Right lobe of liver (tissue), 6 donors: ENCODE measurements at regions of chr18 and their contacts with region 1.

Region 1: DNA sequence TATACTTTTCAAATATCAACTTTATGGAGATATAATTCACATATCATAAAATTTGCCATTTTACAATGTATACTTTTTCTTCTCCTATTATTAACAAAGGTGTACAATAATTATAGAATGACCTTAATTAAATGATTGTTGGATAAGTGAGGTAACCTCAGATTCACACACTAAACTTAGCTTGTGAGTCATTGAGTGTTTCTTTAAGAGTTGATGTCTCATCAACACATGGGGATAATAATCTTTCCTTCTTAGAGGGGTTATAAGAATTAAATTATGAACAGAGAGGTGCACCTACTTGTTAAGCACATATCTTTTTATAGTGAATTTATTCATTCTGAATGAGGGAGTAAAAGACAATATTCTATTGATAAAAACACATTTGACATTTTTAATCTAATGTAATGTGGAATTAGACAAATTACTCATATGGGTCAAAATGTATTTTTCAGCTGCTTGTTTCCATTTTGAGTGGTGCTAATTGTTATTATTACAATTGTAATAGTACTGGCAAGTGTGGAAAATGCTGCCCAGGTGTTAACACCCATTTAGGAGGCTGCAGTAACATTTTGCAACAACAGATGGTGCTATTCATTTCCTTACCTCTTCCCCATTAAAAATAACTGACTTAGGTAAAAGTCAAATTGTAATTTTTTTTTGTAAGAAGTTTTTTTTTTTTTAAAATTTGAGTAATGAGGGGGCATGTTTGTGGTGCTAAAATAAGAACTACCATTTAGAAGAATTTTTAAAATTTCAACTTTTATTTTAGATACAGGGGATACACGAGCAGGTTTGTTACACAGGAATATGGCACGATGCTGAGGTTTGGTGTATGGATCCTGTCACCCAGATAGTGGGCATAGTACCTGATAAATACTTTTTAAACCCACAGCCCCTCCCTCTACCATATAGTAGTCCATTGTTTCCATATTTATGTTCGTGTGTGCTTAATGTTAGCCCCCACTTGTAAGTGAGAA is 32.1 kb upstream of the DYNAP start:
- DNase-seq: no peak
- ATAC-seq: peak; percentile 62 to 79 (median 72)
- H3K4me3 ChIP-seq: no peak overlapping the region
- H3K27ac ChIP-seq: no peak overlapping the region
- H3K4me1 ChIP-seq: no peaks in the 10 kb centered on the region
- H3K27me3 ChIP-seq: no peaks in the 10 kb centered on the region
- CTCF ChIP-seq: peak; percentile 71 to 81 (median 78)
- POLR2A ChIP-seq: no peak

Region 2: DNA sequence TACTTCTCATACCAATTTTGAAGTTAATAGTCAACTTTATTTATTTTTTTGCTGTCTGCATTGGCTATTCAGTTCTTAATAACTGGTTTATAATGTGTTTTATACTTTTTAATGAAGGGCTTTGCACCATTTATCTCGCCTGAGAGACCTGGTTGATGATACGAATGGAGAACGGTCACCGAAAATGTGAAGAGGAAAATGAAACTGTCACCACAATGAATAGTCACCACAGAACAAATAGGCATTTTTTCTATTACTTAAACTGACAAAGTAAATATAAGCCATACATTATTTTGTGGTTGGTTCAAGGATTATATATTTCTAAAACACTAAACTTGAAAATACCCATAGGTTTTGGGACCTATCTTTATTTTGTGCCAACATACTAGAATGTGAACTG is 180.8 kb before region 1 on chr18:
- intact Hi-C with region 1: no loop called
- DNase-seq: no peak
- ATAC-seq: no peak
- H3K4me3 ChIP-seq: no peak overlapping the region
- H3K27ac ChIP-seq: no peak overlapping the region
- H3K4me1 ChIP-seq: no peaks in the 10 kb centered on the region
- H3K27me3 ChIP-seq: no peaks in the 10 kb centered on the region
- CTCF ChIP-seq: no peak
- POLR2A ChIP-seq: no peak

Region 3: GRCh38 chr18:54480616-54481015 is 78.3 kb before region 1 on chr18:
- intact Hi-C with region 1: no loop called
- DNase-seq: no peak
- ATAC-seq: no peak
- H3K4me3 ChIP-seq: no peak overlapping the region
- H3K27ac ChIP-seq: no peak overlapping the region
- H3K4me1 ChIP-seq: no peaks in the 10 kb centered on the region
- H3K27me3 ChIP-seq: no peaks in the 10 kb centered on the region
- CTCF ChIP-seq: no peak
- POLR2A ChIP-seq: no peak

Region 4: DNA sequence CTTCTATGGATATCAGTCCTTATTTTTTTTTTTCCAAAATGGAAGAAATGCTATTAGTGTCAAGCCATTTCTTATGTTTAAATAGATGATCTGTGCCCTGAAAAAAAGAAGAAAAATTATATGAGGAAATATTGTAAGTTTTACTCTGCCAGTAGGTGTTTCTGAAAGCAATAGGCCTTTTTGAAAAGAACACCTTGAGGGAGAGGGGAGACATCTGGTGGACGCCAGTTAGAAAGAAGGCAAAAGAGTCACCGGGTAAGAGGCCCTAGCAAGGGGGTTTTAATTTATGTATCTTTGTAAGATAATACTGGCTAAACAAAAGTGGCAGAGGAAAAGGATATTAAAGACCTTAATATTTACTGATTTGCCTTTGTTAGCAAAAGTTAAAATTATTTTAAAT is 88.3 kb after region 1 on chr18:
- intact Hi-C with region 1: loop called in 1 of 2 experiments (anchors 10 kb)
- DNase-seq: no peak
- ATAC-seq: peak; percentile 67 to 83 (median 72)
- H3K4me3 ChIP-seq: no peak overlapping the region
- H3K27ac ChIP-seq: no peak overlapping the region
- H3K4me1 ChIP-seq: no peaks in the 10 kb centered on the region
- H3K27me3 ChIP-seq: no peaks in the 10 kb centered on the region
- CTCF ChIP-seq: peak; percentile 52 to 66 (median 60)
- POLR2A ChIP-seq: no peak